ENCODE measurements at regions of chr20 and their contacts with region 1.

Region 1: GRCh38 chr20:46013826-46014516 is 5.3 kb downstream of the MMP9 start:
- DNase-seq: peak in 1 of 2 experiments; percentile 91
- H3K4me3 ChIP-seq: peak overlapping the region; percentile 23 to 60 (median 38)
- H3K27ac ChIP-seq: 0 out of 2 replicates have a peak overlapping the region, but pooled peaks have one; percentile 4
- H3K4me1 ChIP-seq: peaks cover 0 to 4% (median 2%) of the 10 kb centered on the region in 4 experiments; a peak in 3 of 7 replicates
- H3K27me3 ChIP-seq: peaks cover 0 to 7% (median 5%) of the 10 kb centered on the region in 4 experiments; a peak in 4 of 7 replicates
- CTCF ChIP-seq: peak; percentile 75 to 95 (median 80)
- EP300 ChIP-seq: peak in 1 of 2 experiments; percentile 49; a peak in 1 of 3 replicates
- POLR2A ChIP-seq: peak in 1 of 2 experiments; percentile 45; a peak in 1 of 3 replicates
- RAD21 ChIP-seq: peak; percentile 75 to 84

Region 2: DNA sequence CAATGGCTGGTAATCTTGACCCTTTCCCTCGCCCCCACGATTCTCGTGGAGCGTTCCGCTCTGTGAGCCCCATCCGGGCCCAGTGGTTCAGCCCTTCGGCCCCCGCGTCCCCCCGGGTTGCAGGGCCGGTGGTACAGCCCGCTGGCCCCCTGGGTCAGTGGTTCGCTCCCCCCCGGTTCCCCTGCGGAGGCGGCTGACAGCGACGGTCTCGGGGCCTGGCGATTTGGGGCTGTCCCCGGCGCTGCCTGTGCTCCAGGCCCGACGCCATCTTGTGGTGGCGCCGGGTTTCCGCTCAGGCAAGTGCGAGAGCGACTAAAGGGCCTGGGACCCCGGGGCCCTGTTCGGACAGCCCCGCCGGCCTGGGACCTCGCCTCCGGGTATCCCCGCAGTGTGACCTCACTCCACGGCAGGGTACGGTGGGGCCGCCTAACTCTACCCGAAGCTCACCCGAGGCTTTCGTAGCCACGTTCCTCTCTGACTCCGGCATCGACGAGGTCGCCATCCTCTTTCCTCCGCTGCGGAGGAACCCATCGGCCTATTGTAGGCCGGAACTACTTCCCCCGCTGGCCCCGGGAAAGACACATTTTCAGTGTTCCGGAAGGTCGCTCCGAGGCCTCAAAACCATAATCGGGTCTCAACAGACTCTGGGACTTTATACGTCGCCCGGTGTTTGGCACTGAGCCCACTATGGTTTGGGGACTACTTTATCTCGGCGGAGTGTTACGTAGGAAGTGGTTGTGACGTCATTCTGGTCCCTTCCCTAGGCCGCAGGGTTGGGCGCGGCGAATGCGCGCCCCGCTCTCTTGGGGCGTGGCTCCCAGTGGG is 42.1 kb before region 1 on chr20 and contains the start of gene ZNF335:
- CTCF ChIA-PET with region 1: interaction called, 39 read pairs
- POLR2A ChIA-PET with region 1: interaction called, 4 read pairs
- DNase-seq: peak; percentile 88 to 96
- H3K4me3 ChIP-seq: peak within 1 kb of the TSS; percentile 67 to 99 (median 82)
- H3K27ac ChIP-seq: peak within 1 kb of the TSS; percentile 100
- H3K4me1 ChIP-seq: peaks cover 0 to 8% (median 2%) of the 10 kb centered on the region in 4 experiments; a peak in 4 of 7 replicates
- H3K27me3 ChIP-seq: no peaks in the 10 kb centered on the region
- CTCF ChIP-seq: peak in 1 of 3 experiments; percentile 18; a peak in 1 of 4 replicates
- EP300 ChIP-seq: peak in 1 of 2 experiments; percentile 99; a peak in 2 of 3 replicates
- POLR2A ChIP-seq: peak in 1 of 2 experiments; percentile 88; a peak in 2 of 3 replicates
- RAD21 ChIP-seq: no peak
- total RNA-seq, gene ZNF335: 14.6 and 15.9 TPM in 2 replicates

Region 3: DNA sequence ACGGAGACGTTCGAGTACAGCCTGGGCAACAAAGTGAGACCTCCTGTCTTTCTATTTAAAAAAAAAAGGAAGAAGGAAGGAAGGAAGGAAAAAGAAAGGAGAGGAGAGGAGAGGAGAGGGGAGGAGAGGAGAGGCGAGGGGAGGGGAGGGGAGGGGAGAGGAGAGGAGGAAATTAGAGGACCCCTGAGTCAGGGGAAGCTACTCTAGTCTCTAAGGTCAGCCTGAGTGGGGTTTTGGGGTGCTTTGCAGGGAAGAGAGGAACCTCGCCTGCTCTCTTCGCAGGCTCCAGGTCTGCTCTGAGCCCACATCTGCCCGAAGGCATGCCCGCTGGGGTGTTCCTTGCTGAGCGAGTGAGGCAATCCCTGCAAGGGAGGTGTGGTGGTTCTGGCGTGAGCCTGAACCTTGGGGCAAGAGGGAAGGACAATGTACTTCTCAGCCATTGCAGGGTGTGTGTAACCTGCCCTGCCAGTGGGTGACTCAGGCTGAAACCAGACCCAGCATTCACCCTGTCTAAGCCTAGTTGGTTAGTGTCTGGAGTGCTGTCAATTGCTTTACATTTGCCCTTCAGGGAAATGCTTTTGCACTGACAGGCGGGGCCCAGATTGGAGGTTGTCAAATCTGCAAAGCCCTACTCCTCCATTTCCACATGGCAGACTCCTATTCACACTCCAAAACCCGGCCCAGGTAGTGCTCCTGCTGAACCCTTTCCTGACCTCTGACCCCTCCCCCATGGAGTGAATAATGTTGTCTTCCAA is 20.6 kb before region 1 on chr20:
- CTCF ChIA-PET with region 1: interaction called, 156 read pairs
- POLR2A ChIA-PET with region 1: interaction called, 3 read pairs
- DNase-seq: no peak
- H3K4me3 ChIP-seq: no peak overlapping the region
- H3K27ac ChIP-seq: no peak overlapping the region
- H3K4me1 ChIP-seq: peaks cover 0 to 6% (median 3%) of the 10 kb centered on the region in 4 experiments; a peak in 3 of 7 replicates
- H3K27me3 ChIP-seq: no peaks in the 10 kb centered on the region
- CTCF ChIP-seq: no peak
- EP300 ChIP-seq: no peak
- POLR2A ChIP-seq: no peak
- RAD21 ChIP-seq: no peak

Region 4: DNA sequence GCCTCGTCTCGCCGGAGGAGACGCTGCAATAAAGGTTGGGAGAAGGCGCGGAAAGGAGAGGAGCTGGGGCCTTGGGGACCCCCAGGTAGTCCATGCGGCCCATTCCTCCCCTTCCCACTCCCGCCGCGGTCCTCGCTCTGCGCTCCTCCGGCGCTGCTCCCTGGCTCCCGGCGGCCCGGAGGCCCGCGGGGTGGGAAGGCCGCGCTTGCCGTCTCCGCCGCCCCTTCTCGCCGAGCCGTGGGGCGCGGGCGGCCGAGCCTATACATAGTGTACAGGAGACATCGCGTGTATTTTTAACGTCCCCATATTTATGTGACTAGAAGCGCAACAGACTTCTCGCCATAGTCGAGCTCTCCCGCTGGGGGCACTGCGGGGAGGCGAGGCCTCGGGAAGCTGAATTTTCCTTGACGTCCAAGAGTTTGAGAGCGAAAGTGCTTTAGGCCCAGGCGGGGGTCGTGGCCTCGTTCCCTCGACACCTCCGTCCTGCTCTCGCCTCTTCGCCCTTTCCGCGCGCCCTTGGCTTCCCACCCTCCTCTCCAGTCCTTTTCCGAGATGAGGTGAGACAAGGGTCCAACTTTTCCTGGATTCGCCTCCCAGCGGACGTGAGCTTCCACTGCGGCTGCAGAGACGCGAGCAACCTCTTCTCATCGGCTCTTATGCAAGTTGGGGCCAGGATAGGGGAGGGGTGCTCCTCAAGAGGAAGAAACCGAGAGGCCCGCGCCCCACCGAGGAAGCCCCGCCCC is 44.1 kb after region 1 on chr20:
- CTCF ChIA-PET with region 1: interaction called, 41 read pairs
- POLR2A ChIA-PET with region 1: interaction called, 12 read pairs
- DNase-seq: no peak
- H3K4me3 ChIP-seq: peak overlapping the region; percentile 8 to 57 (median 36); a peak in 7 of 8 replicates
- H3K27ac ChIP-seq: no peak overlapping the region
- H3K4me1 ChIP-seq: peaks cover 0 to 14% (median 12%) of the 10 kb centered on the region in 4 experiments; a peak in 6 of 7 replicates
- H3K27me3 ChIP-seq: peaks cover 4 to 49% (median 34%) of the 10 kb centered on the region in 4 experiments
- CTCF ChIP-seq: peak; percentile 47 to 64 (median 57)
- EP300 ChIP-seq: no peak
- POLR2A ChIP-seq: no peak
- RAD21 ChIP-seq: peak; percentile 18 to 42; a peak in 3 of 4 replicates

Region 5: DNA sequence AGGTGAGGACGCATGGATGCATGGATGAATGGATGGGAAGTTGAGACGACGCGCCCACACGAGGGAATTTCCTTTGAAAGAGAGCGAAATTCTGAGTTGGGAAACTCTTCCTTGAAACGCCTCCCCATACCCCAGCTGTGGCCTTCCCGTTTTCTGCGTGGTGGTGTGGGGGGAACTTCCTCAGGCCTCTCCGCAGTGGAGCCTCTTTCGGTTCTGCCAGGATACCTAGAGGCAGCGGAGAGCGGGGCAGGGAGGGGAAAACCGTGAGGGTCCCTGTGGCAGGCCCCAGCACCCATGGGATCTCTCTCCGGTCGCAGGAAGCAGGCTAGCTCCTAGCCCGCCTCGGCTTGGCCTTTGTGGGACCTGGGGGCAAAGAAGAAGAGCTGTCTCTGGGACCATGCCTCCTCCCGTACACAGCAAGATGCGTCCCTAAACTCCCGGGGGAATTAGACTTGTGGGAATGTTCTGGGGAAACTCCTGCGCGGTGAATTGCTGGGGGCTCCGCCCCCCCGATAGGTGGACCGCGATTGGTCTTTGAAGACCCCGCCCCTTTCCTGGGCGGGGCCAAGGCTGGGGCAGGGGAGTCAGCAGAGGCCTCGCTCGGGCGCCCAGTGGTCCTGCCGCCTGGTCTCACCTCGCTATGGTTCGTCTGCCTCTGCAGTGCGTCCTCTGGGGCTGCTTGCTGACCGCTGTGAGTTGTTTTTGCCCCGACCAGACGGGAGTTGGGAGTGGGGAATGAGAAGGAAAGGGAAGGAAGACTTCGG is 103.9 kb after region 1 on chr20 and contains the start of gene CD40:
- CTCF ChIA-PET with region 1: interaction called, 12 read pairs
- POLR2A ChIA-PET with region 1: no interaction called
- DNase-seq: peak; percentile 51 to 95
- H3K4me3 ChIP-seq: peak within 1 kb of the TSS; percentile 53 to 72 (median 64)
- H3K27ac ChIP-seq: no peak within 1 kb of the TSS
- H3K4me1 ChIP-seq: peaks cover 0 to 3% (median 0%) of the 10 kb centered on the region in 4 experiments; a peak in 2 of 7 replicates
- H3K27me3 ChIP-seq: peaks cover 0 to 25% (median 9%) of the 10 kb centered on the region in 4 experiments; a peak in 5 of 7 replicates
- CTCF ChIP-seq: no peak
- EP300 ChIP-seq: no peak
- POLR2A ChIP-seq: peak in 1 of 2 experiments; percentile 78; a peak in 2 of 3 replicates
- RAD21 ChIP-seq: no peak
- total RNA-seq, gene CD40: 12.1 and 14.5 TPM in 2 replicates